ENCODE measurements at regions of chr1 and their contacts with region 1.

Region 1: GRCh38 chr1:17045634-17046333 is 8.0 kb downstream of the SDHB start:
- DNase-seq: no peak
- ATAC-seq: peak in 1 of 2 donors; percentile 81

Region 2: DNA sequence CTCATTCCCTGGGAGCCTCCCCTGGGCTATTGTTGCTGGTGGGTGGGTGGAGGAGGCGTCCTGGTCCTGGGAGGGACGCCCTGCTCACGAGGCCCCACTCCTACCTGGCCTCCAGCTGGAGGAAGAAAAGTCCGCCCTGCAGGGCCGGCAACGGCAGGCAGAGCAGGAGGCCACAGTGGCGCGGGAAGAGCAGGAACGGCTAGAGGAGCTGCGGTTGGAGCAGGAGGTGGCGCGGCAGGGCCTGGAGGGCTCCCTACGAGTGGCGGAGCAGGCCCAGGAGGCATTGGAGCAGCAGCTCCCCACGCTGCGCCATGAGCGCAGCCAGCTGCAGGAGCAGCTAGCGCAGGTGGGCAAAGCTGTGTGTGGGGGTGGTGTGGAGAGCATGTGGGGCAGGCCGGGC is 99.1 kb before region 1 on chr1:
- intact Hi-C with region 1: loop called in 1 of 2 experiments (anchors 2 kb)
- DNase-seq: no peak
- ATAC-seq: no peak

Region 3: GRCh38 chr1:16958503-16958902 is 87.3 kb before region 1 on chr1:
- intact Hi-C with region 1: loop called in 1 of 2 experiments (anchors 5 kb)
- DNase-seq: no peak
- ATAC-seq: no peak